ENCODE measurements at regions of chr14 and their contacts with region 1.

Region 1: GRCh38 chr14:96053600-96054381 is 14.6 kb downstream of the C14orf132 start:
- DNase-seq: peak in 9 of 10 donors; percentile 72 to 94 (median 75)
- H3K4me3 ChIP-seq: peak overlapping the region in 26 of 59 donors; percentile 1 to 45 (median 10)
- H3K27ac ChIP-seq: peak overlapping the region in 58 of 59 donors; percentile 10 to 95 (median 86)
- H3K27me3 ChIP-seq: no peaks in the 10 kb centered on the region
- CTCF ChIP-seq: peak in 2 of 56 donors; percentile 9 to 16

Region 2: GRCh38 chr14:95979339-95980042 is 74.3 kb before region 1 on chr14:
- intact Hi-C with region 1: no loop called
- DNase-seq: no peak
- H3K4me3 ChIP-seq: no peak overlapping the region
- H3K27ac ChIP-seq: no peak overlapping the region
- H3K27me3 ChIP-seq: peaks cover 0 to 43% (median 12%) of the 10 kb centered on the region in 45 donors
- CTCF ChIP-seq: peak in 9 of 56 donors; percentile 15 to 32 (median 20)

Region 3: DNA sequence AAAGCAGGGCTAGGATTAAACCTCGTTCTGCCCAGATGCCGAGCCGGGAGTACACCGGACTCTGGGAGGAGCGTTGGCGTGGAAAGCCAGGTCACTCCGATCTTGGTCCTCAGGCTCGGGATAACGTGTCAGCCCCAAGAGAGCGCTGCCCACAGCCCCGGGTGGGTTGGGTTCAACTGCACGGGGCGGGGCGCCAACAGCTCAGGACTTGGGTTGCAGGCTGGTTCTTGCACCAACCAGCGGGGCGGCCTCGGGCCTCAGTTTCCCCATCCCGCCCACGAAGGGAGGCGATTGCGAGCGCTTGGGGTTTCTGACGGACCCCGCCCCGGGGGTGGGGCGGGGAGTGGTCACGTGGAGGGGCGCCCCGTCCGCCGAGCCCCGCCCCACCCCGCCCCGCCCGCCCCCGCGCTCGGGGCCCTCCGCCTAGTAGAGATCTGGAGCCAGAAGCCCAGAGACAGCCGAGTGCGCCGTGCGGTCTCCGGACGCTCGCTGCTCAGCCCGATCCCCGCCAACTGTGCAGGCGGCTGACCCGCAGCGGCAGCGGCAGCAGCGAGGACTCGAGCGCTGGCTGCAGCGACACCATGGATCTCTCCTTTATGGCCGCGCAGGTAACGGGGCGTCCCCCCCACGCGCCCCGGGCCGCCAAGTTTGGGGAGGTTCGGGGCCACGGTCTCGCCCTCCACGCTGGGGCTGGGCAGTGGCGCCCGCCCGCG is 14.7 kb before region 1 on chr14 and contains the start of gene C14orf132:
- intact Hi-C with region 1: loop called in 1 of 2 experiments (anchors 1 kb)
- DNase-seq: peak; percentile 66 to 86 (median 76)
- H3K4me3 ChIP-seq: peak within 1 kb of the TSS; percentile 45 to 98 (median 85)
- H3K27ac ChIP-seq: peak within 1 kb of the TSS in 58 of 59 donors; percentile 42 to 96 (median 89)
- H3K27me3 ChIP-seq: no peaks in the 10 kb centered on the region
- CTCF ChIP-seq: peak in 7 of 56 donors; percentile 2 to 27 (median 16)
- total RNA-seq, gene C14orf132: 92.3 to 230 (median 143) TPM

Region 4: DNA sequence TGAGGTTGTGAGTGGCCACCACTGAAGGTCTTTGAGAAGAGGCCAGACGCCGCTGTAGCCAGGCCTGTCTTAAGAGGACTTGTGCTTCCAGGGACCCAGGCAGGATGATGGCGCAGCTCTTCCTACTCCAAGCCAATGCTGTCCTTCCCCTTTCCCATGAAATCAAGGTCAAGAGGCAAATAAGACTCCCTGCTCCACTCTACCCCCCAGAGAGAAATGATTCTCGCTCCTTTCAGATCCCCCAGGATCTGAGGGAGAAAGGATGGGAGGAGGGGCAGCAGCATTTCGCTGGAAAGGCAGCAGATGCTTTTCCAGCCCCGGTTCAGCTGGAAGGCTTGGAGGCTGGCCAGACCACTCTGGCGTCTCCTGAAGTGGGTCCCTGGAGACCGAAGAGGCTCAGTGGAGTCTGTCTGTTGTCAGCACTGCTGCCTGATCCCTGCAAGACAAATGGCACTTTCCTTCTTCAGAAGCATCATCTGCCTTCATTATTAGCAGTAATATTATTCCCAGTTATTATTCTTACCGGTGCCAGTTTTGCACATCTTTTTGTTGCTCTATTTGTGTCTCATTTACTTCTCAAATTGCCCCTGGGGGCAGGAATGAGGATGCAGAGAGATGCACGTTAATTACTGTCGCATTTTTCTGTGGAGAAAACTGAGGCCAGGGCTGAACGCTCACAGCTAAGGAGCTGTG is 36.8 kb after region 1 on chr14:
- intact Hi-C with region 1: loop called in 1 of 2 experiments (anchors 5 kb)
- DNase-seq: peak in 9 of 10 donors; percentile 43 to 75 (median 63)
- H3K4me3 ChIP-seq: peak overlapping the region in 3 of 59 donors; percentile 5 to 28 (median 7)
- H3K27ac ChIP-seq: peak overlapping the region in 50 of 59 donors; percentile 8 to 77 (median 48)
- H3K27me3 ChIP-seq: no peaks in the 10 kb centered on the region
- CTCF ChIP-seq: peak in 1 of 56 donors; percentile 3